ENCODE measurements at regions of chr1 and their contacts with region 1.

Region 1: GRCh38 chr1:160078512-160079195 is 2.7 kb upstream of the KCNJ9 start:
- DNase-seq: peak; percentile 56
- H3K4me3 ChIP-seq: no peak overlapping the region
- H3K27ac ChIP-seq: no peak overlapping the region
- H3K4me1 ChIP-seq: no peaks in the 10 kb centered on the region
- CTCF ChIP-seq: peak; percentile 97

Region 2: DNA sequence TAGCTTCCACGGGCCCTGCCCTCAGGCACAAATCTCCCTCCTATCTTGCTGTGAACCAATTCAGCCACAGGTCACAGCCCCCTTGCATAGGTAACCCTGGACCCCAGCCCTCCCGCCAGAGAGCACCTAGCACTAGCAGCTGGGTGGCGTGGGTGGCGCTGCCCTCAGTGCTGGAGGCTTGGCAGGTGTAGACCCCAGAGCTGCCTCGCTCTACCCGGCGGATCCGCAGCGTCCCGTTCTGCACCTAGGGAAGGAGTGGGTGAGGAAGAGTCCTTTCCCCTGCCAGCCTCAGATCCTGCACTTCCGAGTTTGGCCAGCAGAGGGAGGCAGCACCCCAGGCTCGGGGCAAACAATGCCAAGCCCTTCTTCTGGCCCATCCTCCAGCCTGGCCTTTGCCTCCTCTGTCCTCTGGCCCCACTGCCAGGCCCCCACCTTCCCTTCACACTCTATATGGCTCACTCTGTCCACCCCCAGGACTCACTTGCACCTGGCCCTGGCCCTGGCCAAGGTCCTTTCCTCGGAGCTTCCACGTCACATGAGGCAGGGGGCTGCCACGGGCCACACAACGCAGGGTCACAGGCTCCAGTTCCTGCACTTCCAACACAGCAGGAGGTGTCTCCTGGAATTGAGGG is 142.3 kb before region 1 on chr1:
- CTCF ChIA-PET with region 1: no interaction called
- POLR2A ChIA-PET with region 1: no interaction called
- intact Hi-C with region 1: loop called (anchors 2 kb)
- DNase-seq: peak; percentile 60
- H3K4me3 ChIP-seq: no peak overlapping the region
- H3K27ac ChIP-seq: no peak overlapping the region
- H3K4me1 ChIP-seq: peaks cover 8% of the 10 kb centered on the region
- CTCF ChIP-seq: peak; percentile 83

Region 3: DNA sequence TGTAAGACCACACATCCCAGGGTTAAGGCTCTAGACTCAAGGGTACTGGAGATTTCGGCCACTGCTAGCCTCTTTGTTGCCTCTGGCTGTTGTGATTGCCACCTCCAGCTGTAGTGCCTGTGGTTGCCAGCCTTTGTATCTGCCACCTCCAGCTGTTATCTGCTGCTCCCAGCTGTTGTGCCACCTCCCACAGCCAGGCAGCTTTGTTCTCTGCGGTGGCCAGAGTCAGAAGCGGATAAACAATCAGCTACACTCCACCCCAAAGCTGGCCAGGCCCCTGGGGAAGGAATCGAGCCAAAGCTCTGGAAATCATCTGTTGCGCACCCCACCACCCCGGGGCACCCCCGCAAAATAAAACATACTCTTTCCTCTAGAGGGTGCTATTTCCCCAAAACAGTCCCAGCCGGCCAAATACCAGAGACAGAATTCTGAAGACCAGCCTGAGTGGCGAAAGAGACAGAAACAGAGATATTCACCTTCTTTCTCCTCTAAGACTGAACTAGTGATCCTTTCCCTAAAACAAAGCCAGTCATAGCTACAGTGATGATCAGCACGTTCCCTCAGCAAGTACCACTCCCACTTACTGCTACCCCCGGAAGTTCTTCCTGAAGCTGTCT is 32.1 kb before region 1 on chr1:
- CTCF ChIA-PET with region 1: interaction called, 19 read pairs
- POLR2A ChIA-PET with region 1: interaction called, 3 read pairs
- intact Hi-C with region 1: loop called (anchors 1 kb)
- DNase-seq: peak; percentile 62
- H3K4me3 ChIP-seq: peak overlapping the region; percentile 50
- H3K27ac ChIP-seq: no peak overlapping the region
- H3K4me1 ChIP-seq: peaks cover 18% of the 10 kb centered on the region
- CTCF ChIP-seq: peak; percentile 93